ENCODE measurements at regions of chr11 and their contacts with region 1.

Region 1: GRCh38 chr11:121929581-121929980 is 186.4 kb downstream of the BLID start:
- DNase-seq: no peak
- H3K4me3 ChIP-seq: no peak overlapping the region
- H3K27me3 ChIP-seq: no peaks in the 10 kb centered on the region
- CTCF ChIP-seq: no peak

Region 2: DNA sequence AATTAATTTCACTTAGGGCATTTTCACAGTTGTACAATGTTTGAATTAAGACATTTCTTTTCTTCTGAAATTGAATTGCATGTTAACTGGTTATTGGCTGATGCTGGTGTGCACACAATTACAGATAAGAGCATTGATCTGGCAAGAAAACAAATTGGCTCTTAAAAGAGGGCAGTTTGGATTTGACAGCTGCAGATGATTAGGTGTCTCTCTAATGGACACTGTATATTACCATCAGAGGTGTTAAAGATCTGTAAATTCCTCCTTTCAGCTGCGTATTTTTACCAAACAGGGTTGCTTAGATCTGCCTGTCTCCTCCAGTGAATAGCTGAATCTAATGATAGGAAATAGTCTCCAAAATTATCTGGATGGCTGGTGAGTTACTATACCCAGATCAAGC is 12.1 kb before region 1 on chr11:
- CTCF ChIA-PET with region 1: interaction called, 15 read pairs
- POLR2A ChIA-PET with region 1: interaction called, 7 read pairs
- DNase-seq: no peak
- H3K4me3 ChIP-seq: no peak overlapping the region
- H3K27me3 ChIP-seq: no peaks in the 10 kb centered on the region
- CTCF ChIP-seq: no peak